ENCODE measurements at regions of chr4 and their contacts with region 1.

Region 1: GRCh38 chr4:108620101-108620932 is at the start of gene RPL34:
- DNase-seq: peak; percentile 96 to 99 (median 97)
- ATAC-seq: peak; percentile 100
- H3K4me3 ChIP-seq: peak within 1 kb of the TSS; percentile 38 to 92 (median 78)
- H3K27ac ChIP-seq: peak within 1 kb of the TSS; percentile 54 to 88 (median 80)
- H3K4me1 ChIP-seq: peaks cover 0 to 46% (median 20%) of the 10 kb centered on the region in 12 donors
- H3K27me3 ChIP-seq: no peaks in the 10 kb centered on the region
- CTCF ChIP-seq: no peak
- POLR2A ChIP-seq: peak in 1 of 2 donors; percentile 85
- total RNA-seq, gene RPL34: 334 to 856 (median 719) TPM

Region 2: DNA sequence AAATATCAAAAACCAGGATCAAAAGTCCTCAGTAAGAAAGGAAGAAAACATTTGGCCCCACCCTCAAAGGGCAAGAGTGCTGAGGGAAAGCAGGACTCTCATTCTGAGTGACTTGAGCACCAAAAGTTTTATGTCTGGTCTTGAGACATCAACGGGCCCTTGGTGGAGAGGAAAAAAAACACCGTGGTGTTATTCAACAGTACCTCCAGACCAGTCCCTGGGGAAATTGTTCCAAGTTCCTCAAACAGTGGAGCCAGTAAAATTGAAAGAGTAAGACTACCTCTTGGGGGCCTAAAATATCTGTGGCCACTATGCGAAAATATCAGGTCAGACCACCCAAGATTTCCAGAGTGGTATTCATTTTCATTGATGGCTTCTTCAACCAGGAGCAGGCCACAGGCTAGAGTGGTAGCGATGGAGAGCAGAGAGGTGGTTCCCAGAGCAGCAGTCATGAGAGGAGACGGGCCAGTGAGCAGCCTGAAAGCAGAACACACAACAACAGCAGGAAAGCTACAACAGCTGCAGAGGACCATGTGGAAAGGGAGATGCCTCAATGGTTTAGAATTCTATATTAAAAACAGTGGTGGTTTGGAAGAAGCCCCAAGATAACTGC is 63.6 kb before region 1 on chr4:
- intact Hi-C with region 1: no loop called
- DNase-seq: no peak
- ATAC-seq: no peak
- H3K4me3 ChIP-seq: no peak overlapping the region
- H3K27ac ChIP-seq: no peak overlapping the region
- H3K4me1 ChIP-seq: peaks cover 0 to 26% (median 7%) of the 10 kb centered on the region in 12 donors
- H3K27me3 ChIP-seq: no peaks in the 10 kb centered on the region
- CTCF ChIP-seq: no peak
- POLR2A ChIP-seq: no peak

Region 3: GRCh38 chr4:108650212-108651013 is 30.1 kb after region 1 on chr4 and contains the start of gene OSTC:
- intact Hi-C with region 1: loop called in 4 of 10 experiments (anchors 1 to 2 kb)
- DNase-seq: peak; percentile 95 to 98 (median 96)
- ATAC-seq: peak; percentile 95 to 98 (median 98)
- H3K4me3 ChIP-seq: peak within 1 kb of the TSS; percentile 56 to 92 (median 78)
- H3K27ac ChIP-seq: peak within 1 kb of the TSS; percentile 79 to 93 (median 87)
- H3K4me1 ChIP-seq: peaks cover 3 to 25% (median 17%) of the 10 kb centered on the region in 12 donors
- H3K27me3 ChIP-seq: no peaks in the 10 kb centered on the region
- CTCF ChIP-seq: peak in 9 of 12 donors; percentile 7 to 62 (median 35)
- POLR2A ChIP-seq: peak in 1 of 2 donors; percentile 54
- total RNA-seq, gene OSTC: 20.5 to 56.7 (median 28.7) TPM